H1 (cell line): ENCODE measurements at regions of chr19 and their contacts with region 1.

Region 1: DNA sequence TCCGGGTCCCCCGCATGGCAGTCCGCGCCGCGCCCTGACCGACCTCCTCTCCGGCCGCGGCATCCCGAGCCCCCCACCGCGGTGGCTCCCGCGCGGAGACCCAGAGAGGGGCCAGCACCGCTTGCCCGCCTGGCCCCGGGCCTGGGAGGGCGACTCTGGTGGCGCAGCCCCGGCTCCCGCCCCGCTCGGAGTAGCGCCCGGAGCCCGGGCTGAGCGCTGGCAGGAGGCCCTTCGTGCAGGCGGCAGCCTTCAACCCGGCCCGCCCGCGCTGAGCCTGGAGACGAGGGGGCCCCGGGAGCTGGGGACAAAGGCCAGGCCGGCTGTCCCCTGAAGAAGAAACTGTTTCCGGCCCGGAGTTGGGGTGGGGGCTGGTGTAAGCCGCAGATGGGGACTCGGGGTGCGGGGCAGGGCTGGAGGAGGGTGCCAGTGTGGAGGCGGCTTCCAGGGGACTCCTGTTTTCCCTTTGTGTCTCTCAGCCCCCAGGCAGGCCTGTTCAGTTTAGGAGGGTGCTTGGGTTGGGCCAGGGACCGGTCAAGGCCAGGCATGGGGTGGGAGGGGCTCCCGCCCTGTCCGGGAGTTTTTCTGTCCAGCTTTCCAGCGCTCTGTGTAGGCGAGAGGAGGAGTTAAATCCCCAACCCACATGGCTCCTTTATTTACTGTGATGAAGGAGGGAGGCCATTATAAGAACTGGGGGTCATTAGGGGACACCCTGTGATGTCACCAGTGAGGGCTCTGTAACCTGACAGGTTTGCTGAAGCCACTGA is 938 bp downstream of the LRP3 start:
- DNase-seq: peak in 1 of 2 experiments; percentile 73
- H3K4me3 ChIP-seq: peak overlapping the region; percentile 44 to 89 (median 56)
- H3K27ac ChIP-seq: no peak overlapping the region
- H3K4me1 ChIP-seq: peaks cover 0 to 4% (median 1%) of the 10 kb centered on the region in 4 experiments; a peak in 4 of 7 replicates
- H3K27me3 ChIP-seq: peaks cover 0 to 23% (median 10%) of the 10 kb centered on the region in 4 experiments; a peak in 5 of 7 replicates
- CTCF ChIP-seq: no peak
- EP300 ChIP-seq: no peak
- POLR2A ChIP-seq: no peak
- RAD21 ChIP-seq: no peak

Region 2: DNA sequence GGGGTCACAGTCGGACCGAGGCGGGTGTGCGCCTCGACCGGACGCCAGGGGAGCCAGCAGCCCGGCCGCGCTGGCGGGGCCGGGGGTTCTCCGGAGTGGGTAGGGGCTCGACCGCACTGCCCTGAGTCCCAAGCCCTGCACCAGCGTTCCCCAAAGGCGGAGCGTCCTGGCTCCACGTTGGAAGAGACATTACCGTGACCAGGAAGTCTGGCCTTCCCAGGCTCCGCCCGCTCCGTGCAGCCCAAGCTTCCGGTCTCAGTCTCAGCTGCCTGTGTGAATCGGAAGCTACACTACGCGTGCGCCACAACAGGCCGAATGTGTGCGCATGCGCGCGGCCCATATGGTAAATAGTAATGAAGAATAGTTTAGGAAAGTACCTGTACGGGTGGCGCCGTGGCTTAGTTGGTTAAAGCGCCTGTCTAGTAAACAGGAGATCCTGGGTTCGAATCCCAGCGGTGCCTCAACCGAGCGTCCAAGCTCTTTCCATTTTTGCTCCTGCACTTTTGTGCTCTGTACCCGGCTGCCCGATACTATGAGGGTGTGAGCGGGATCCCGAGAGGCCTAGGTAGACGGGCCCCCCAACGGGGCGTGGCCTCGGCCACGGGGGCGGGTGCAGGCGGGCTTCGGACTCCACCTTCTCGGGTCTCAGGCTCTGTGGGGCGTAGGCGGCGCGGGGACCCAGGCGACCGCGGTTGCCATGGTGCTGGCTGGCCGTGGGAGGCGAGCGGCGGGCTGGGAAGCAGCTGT is 18.2 kb before region 1 on chr19:
- CTCF ChIA-PET with region 1: interaction called, 15 read pairs
- POLR2A ChIA-PET with region 1: interaction called, 5 read pairs
- DNase-seq: peak; percentile 96 to 100
- H3K4me3 ChIP-seq: peak overlapping the region; percentile 73 to 91 (median 90)
- H3K27ac ChIP-seq: peak overlapping the region; percentile 78
- H3K4me1 ChIP-seq: peaks cover 0 to 3% (median under 1%) of the 10 kb centered on the region in 4 experiments; a peak in 3 of 7 replicates
- H3K27me3 ChIP-seq: peaks cover 0 to 2% (median 1%) of the 10 kb centered on the region in 4 experiments; a peak in 3 of 7 replicates
- CTCF ChIP-seq: no peak
- EP300 ChIP-seq: 0 out of 3 replicates have a peak, but pooled peaks of 1 of the 2 experiments have one; percentile 33
- POLR2A ChIP-seq: peak; percentile 46 to 88
- RAD21 ChIP-seq: no peak

Region 3: GRCh38 chr19:33214596-33214995 is 19.5 kb after region 1 on chr19:
- CTCF ChIA-PET with region 1: interaction called, 21 read pairs
- POLR2A ChIA-PET with region 1: interaction called, 7 read pairs
- DNase-seq: no peak
- H3K4me3 ChIP-seq: no peak overlapping the region
- H3K27ac ChIP-seq: no peak overlapping the region
- H3K4me1 ChIP-seq: peaks cover 0 to 2% (median under 1%) of the 10 kb centered on the region in 4 experiments; a peak in 3 of 7 replicates
- H3K27me3 ChIP-seq: no peaks in the 10 kb centered on the region
- CTCF ChIP-seq: peak; percentile 56 to 77 (median 58)
- EP300 ChIP-seq: no peak
- POLR2A ChIP-seq: no peak
- RAD21 ChIP-seq: peak; percentile 46 to 54